ENCODE measurements at regions of chr2 and their contacts with region 1.

Region 1: DNA sequence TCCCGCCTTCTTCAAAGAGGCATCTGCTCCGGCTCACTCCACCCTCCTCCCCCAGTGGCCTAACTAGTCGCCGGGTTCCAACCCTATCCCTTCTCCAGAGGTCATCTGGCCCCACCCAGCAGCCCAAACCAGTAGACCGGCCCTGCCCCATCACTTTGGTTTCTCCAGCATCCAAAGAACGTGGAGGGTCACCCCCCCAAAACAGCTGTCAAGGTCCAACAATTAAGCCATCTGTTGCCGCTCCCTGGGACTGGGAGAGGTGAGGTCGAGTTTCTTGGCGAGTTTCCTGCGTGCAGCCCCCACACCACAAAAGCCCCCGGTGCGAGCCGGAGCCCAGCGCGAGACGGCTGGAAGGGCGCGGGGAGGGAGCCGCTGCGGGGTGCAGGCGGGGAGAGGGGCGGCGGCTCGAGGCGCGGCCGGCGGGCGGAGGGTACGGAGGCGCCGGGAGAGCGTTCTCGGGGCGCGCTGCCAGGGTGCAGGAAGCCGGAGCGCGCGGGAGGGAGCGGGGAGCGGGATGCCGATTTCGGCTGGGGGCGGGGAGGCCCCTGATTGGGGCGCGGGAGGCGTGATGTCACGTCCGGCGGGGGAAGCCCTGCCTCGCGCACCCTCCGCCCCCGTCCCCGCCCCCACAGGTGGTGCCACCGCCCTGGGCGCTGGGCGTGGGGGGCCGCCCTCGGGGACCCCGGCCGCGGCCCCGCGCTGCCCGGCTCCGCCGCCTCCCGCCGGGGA is 571 bp upstream of the GPC1 start:
- DNase-seq: peak; percentile 97

Region 2: DNA sequence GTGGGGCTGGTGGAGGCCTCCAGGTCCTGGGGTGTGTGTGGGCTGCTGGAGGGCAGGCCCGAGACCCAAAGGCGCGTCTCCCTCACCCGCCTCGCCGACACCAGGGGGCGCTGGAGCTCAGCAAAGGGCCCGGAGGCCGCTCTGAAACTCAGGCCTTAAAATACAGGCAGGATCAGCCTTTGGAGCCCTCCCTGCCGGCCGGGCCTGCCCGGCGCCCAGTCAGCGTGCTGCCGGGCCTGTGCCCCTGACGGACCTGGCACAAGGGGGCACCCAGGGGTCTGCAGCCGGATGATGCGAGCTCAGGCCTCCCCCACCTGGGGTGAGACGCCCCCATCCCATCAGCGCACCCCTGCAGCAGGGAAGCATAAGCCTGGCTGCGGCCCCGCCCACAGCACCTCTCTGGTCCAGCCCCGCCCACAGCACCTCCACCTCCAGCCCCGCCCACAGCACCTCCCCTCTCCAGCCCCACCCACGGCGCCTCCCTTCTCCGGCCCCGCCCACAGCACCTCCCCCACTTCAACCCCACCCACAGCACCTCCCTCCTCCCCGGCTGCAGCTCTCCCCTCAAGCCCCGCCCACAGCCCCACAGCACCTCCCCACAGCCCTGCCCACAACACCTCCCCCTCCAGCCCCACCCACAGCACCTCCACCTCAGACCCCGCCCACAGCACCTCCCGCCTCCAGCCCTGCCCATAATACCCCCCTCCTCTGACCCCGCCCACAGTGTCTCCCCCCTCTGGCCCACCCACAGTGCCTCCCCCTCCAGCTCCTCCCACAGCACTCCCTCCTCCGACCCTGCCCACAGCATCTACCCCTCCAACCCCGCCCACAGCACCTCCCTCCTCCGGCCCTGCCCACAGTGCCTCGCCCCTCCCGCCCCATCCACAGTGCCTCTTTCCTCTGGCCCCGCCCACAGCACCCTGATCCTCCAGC is 201.7 kb before region 1 on chr2:
- intact Hi-C with region 1: loop called (anchors 2 kb)
- DNase-seq: peak; percentile 94

Region 3: DNA sequence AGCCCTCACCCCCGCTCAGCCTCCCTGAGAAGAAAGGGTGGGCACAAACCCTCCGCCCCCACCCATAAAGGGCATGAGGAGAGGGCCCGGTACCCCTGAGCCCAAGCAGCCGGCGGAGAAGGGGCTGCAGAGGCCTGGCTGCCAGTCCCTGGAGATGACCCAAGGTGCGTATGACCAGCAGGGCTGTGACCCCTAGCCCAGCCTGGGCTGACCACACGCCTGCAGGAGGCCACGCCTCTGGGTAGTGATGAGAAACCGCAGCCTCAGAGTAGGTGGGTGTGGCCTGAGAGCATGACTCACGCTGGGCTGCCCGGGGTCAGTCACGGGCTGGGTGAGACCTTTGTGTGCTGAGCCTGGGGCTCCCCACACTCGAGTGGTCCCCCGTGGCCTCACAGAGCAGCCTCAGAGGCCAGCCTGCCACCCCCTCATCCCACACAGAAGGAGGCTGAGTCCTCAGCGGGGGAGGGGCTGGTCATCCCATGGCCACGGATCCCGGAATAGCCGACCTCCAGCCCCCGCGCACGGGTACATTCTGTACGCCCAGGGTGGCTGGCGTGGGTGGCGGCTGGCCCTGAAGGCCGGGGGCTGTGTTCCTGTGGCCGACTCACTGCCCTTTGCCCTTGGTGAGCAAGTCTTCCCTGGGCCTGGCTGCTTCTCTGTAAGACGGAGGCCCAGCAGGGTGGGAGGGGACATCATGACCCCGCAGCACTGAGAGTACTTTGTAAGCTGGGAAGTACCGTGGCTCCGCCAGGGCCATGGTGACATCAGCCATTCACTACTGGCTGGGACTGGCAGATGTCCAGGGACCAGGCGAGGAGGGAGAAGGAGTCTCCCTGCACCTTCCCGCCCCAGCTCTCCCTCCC is 183.7 kb before region 1 on chr2:
- intact Hi-C with region 1: loop called in 1 of 2 experiments (anchors 5 kb)
- DNase-seq: peak; percentile 97

Region 4: DNA sequence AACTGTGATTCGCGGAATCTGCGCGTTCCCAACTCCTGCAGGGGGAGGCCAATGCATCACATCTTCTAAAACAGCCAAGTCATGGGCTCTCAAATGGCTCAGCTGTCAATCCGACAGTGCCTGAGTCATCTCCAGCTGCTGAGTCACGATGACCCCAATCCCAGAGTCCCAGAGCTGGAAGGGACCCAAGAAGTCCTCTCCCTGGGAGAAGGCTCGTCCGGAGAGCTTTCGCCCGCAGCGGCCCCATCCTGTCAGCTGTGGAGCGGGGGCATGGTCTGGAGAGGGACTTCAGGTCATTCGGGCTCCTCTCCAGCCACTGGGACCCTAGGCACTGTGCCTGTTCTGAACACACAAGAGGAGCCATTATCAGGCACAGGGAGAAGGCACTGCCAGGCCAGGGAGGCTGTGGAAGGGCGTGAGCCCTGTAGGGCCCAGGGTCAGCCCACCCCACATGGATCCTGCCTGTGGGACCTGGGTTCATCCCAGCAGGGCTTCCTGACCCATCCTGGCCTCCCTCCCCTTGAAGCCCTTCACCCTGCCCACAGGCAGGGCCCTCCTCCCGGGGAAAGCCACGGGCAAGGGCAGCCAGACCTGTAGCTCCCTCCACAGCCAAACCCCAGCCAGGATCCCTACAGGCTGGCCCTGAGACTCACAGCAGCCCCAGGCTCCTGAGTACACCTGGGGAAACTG is 47.1 kb before region 1 on chr2:
- intact Hi-C with region 1: loop called in 1 of 2 experiments (anchors 5 kb)
- DNase-seq: peak; percentile 90

Measured in posterior vena cava (tissue), 2 donors.